Activated T-helper 1 cell treated with anti-CD3 and anti-CD28 coated beads, Interleukin-12 subunit alpha, Interleukin-12 subunit beta, Interleukin-2, Interleukin-4 antibody, amounts not matched to agents 30 ng/mL and 10 ng/mL and 1 ng/mL, durations not matched to agents 14 hours and 24 hours and 36 hours (primary cell): ENCODE measurements at regions of chr15 and their contacts with region 1.

Region 1: DNA sequence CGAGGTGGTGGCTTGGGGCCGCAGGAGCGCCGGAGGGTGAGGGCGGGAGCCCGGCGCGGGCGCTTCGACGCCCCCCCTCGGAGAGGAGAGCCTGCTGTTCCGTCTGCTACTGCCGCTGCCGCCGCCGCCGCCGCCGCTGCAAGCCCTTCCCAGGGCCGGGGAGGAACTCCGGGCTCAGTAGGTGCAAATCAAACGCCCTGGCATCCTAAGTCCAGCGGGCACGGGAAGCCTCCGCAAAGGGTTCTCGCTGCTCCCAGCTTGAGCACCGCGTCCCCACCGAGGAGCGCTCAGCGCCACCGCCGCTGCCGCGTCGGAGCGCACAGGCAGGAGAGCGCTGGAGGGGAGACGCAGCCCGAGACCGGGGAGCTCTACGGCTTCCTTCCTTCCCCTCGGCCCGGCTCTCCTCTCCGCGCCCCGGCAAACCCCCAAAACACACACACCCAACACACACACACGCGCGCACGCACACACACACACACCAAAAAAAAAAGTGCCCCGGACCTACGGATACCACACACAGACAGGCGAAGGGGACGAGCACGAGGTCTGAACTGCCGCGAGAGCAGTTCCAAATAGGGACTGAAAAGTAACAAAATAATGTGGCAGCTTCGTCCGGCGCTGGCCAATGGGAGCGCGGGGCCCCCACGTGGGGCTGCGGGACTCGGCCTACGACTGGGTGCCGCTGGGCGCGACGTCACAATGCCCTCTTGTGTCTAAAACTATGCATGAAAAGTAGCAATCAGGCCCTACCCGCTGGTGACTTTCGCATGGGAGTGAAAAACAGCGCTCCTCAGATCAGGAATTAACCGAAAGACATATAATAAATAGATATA is at the start of gene TLE3:
- DNase-seq: peak; percentile 97
- H3K4me3 Mint-ChIP-seq: peak within 1 kb of the TSS; percentile 98
- H3K27ac Mint-ChIP-seq: peak within 1 kb of the TSS; percentile 99
- H3K4me1 Mint-ChIP-seq: peaks cover 57% of the 10 kb centered on the region
- H3K27me3 Mint-ChIP-seq: peaks cover 19% of the 10 kb centered on the region
- total RNA-seq, gene TLE3: 123 and 126 TPM in 2 replicates

Region 2: GRCh38 chr15:69413822-69414700 is 683.5 kb before region 1 on chr15 and contains the start of gene KIF23:
- intact Hi-C with region 1: loop called (anchors 2 kb)
- DNase-seq: peak; percentile 91
- H3K4me3 Mint-ChIP-seq: peak within 1 kb of the TSS; percentile 89
- H3K27ac Mint-ChIP-seq: peak within 1 kb of the TSS; percentile 73
- H3K4me1 Mint-ChIP-seq: peaks cover 42% of the 10 kb centered on the region
- H3K27me3 Mint-ChIP-seq: peaks cover 2% of the 10 kb centered on the region
- total RNA-seq, gene KIF23: 40.8 and 41.6 TPM in 2 replicates

Region 3: GRCh38 chr15:69576035-69576526 is 521.5 kb before region 1 on chr15:
- intact Hi-C with region 1: loop called (anchors 1 kb)
- DNase-seq: peak; percentile 26
- H3K4me3 Mint-ChIP-seq: no peak overlapping the region
- H3K27ac Mint-ChIP-seq: no peak overlapping the region
- H3K4me1 Mint-ChIP-seq: peaks cover 35% of the 10 kb centered on the region
- H3K27me3 Mint-ChIP-seq: peaks cover 5% of the 10 kb centered on the region

Region 4: GRCh38 chr15:69755551-69756310 is 341.8 kb before region 1 on chr15:
- intact Hi-C with region 1: loop called (anchors 1 kb)
- DNase-seq: peak; percentile 79
- H3K4me3 Mint-ChIP-seq: peak overlapping the region; percentile 70
- H3K27ac Mint-ChIP-seq: peak overlapping the region; percentile 87
- H3K4me1 Mint-ChIP-seq: peaks cover 72% of the 10 kb centered on the region
- H3K27me3 Mint-ChIP-seq: peaks cover 2% of the 10 kb centered on the region

Region 5: GRCh38 chr15:70023064-70023768 is 74.3 kb before region 1 on chr15:
- intact Hi-C with region 1: loop called (anchors 1 kb)
- DNase-seq: peak; percentile 64
- H3K4me3 Mint-ChIP-seq: peak overlapping the region; percentile 65
- H3K27ac Mint-ChIP-seq: peak overlapping the region; percentile 86
- H3K4me1 Mint-ChIP-seq: peaks cover 19% of the 10 kb centered on the region
- H3K27me3 Mint-ChIP-seq: peaks cover 21% of the 10 kb centered on the region

Region 6: DNA sequence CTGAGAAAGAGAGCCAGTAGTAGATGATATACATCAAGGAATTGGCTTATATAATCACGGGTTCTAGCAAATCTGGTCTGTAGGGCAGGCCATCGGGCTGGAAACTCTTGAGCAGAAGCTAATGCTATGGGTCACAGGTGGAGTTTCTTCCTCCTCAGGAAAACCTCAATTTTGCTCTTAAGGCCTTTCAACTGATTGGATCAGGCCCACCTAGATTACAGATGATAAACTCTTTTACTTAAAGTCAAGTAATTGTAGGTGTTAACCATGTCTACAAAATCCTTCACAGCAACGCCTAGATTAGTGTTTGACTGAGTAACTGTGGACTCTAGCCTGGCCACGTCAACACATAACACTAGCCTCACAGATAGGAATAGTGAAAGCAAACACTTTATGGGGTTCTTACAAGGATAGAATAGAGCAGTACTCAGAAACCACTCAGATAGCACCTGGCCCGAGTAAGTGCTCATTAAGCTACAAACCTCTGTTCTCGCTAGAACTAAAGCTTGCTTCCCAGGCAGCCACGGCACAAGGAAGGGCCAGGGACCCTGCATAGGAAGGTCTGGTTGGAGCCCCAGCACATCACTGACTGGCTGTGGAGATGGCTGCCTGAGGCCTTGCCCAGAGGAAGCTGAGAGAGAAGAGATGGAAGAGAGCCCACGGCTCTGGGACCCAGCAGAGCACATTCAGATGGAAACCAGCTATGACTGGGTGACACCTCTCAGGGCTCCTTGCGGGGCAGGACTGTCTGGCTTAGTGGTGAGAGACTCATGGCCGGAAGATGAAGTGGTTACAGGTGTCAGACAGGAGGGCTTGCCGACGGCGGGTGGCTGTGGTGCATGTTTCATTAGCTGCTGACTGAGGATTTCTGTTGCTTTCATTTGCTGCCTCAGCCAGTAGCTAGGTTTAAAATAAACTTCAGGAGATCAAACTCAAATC is 202.6 kb after region 1 on chr15:
- intact Hi-C with region 1: loop called (anchors 2 kb)
- DNase-seq: peak; percentile 71
- H3K4me3 Mint-ChIP-seq: no peak overlapping the region
- H3K27ac Mint-ChIP-seq: peak overlapping the region; percentile 24
- H3K4me1 Mint-ChIP-seq: peaks cover 9% of the 10 kb centered on the region
- H3K27me3 Mint-ChIP-seq: peaks cover 22% of the 10 kb centered on the region

Region 7: DNA sequence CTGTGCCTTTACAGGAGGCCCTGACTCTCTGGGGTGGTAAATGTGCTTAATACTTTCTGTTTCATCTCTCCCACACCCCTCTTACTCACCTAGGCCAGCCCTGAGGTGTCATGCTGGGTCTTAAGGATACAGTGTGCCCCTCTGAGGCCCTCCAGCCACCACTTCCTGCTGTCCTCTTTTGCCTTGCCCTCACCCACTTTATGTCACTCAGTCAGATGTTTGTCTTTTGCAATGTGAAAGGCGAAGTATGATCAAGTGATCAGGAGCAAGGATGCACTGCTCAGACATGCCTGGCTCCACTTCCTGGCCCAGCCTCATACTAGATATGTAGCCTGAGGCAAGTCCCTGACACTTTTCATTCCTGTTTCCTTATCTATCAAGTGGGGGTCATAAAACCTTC is 1373.8 kb after region 1 on chr15:
- intact Hi-C with region 1: no loop called
- DNase-seq: no peak
- H3K4me3 Mint-ChIP-seq: no peak overlapping the region
- H3K27ac Mint-ChIP-seq: no peak overlapping the region
- H3K4me1 Mint-ChIP-seq: peaks cover 7% of the 10 kb centered on the region
- H3K27me3 Mint-ChIP-seq: peaks cover 2% of the 10 kb centered on the region